Spleen (tissue), 13 donors: ENCODE measurements at regions of chr16 and their contacts with region 1.

Region 1: GRCh38 chr16:22898874-22899348 is 84.9 kb downstream of the HS3ST2 start:
- DNase-seq: peak; percentile 83
- H3K4me3 ChIP-seq: peak overlapping the region in 1 of 8 donors; percentile 33
- H3K27ac ChIP-seq: no peak overlapping the region
- H3K4me1 ChIP-seq: peaks cover 0 to 10% (median 9%) of the 10 kb centered on the region in 6 donors
- H3K27me3 ChIP-seq: peaks cover 0 to 62% (median 15%) of the 10 kb centered on the region in 7 donors
- CTCF ChIP-seq: peak; percentile 40 to 88 (median 76)
- POLR2A ChIP-seq: no peak

Region 2: GRCh38 chr16:22948603-22949368 is 49.9 kb after region 1 on chr16:
- intact Hi-C with region 1: loop called (anchors 5 kb)
- DNase-seq: peak; percentile 81
- H3K4me3 ChIP-seq: peak overlapping the region in 6 of 8 donors; percentile 12 to 46 (median 22)
- H3K27ac ChIP-seq: no peak overlapping the region
- H3K4me1 ChIP-seq: peaks cover 4 to 15% (median 11%) of the 10 kb centered on the region in 6 donors
- H3K27me3 ChIP-seq: peaks cover 0 to 50% (median 10%) of the 10 kb centered on the region in 7 donors
- CTCF ChIP-seq: peak; percentile 51 to 90 (median 75)
- POLR2A ChIP-seq: no peak